ENCODE measurements at regions of chr11 and their contacts with region 1.

Region 1: GRCh38 chr11:20926799-20927540 is 257.6 kb downstream of the NELL1 start:
- DNase-seq: no peak
- H3K4me3 ChIP-seq: no peak overlapping the region
- H3K27ac ChIP-seq: no peak overlapping the region
- H3K4me1 ChIP-seq: no peaks in the 10 kb centered on the region
- H3K27me3 ChIP-seq: no peaks in the 10 kb centered on the region
- CTCF ChIP-seq: no peak
- EP300 ChIP-seq: no peak
- RAD21 ChIP-seq: no peak

Region 2: DNA sequence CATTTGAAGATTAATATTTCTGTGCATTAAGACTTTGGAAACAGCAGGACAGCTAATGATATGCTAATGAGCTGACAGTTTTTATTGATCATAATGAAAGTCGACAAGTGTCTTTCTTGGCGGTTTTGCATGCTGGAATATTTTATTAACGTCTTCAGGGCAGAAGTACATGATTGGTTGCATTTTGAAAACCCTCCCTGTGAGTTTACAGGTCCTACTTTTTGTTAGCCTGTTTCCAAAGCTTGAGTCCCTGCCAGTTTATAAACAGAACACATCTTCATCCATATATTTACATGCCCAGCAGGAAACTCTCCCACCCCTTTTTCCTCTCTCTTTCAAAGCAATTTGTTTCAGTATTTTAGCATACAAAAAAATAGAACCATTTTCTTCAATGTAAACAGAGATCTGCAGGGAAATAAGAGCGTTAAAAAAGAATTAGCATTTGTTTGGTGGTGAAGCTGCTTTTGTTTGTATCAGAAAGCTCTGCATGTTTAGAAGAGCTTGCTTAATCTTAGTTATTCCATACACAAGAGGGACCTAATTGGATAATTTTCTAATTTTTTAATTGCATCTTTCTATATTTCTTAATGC is 14.0 kb before region 1 on chr11:
- CTCF ChIA-PET with region 1: interaction called, 10 read pairs
- POLR2A ChIA-PET with region 1: no interaction called
- DNase-seq: no peak
- H3K4me3 ChIP-seq: no peak overlapping the region
- H3K27ac ChIP-seq: no peak overlapping the region; a peak in 1 of 4 replicates
- H3K4me1 ChIP-seq: peaks cover 0 to 8% of the 10 kb centered on the region in 2 experiments; a peak in 2 of 4 replicates
- H3K27me3 ChIP-seq: no peaks in the 10 kb centered on the region
- CTCF ChIP-seq: no peak
- EP300 ChIP-seq: no peak
- RAD21 ChIP-seq: no peak

Region 3: DNA sequence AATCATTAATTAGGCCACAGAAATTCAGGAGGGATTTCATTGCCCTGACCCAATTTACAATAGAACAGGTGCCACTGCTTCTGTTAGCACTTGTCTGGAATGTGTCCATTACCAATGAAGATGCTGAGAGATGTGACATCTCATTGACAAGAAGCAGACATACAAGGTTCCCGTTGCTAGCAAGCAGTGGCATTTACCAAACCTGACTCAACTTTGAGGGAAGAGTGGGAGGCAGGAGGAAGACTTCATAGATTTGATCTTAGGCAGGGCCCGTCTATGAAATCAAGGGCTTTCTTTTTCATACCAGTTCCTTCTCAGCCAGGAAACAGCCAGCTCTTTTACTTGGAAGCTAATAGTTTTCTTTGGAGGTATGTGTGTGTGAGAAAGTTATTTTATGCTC is 22.6 kb after region 1 on chr11:
- CTCF ChIA-PET with region 1: no interaction called
- POLR2A ChIA-PET with region 1: no interaction called
- DNase-seq: no peak
- H3K4me3 ChIP-seq: no peak overlapping the region
- H3K27ac ChIP-seq: no peak overlapping the region
- H3K4me1 ChIP-seq: no peaks in the 10 kb centered on the region; a peak in 1 of 4 replicates
- H3K27me3 ChIP-seq: no peaks in the 10 kb centered on the region
- CTCF ChIP-seq: no peak
- EP300 ChIP-seq: no peak
- RAD21 ChIP-seq: no peak

Measured in SK-N-SH (cell line).